ENCODE measurements at regions of chr4 and their contacts with region 1.

Region 1: GRCh38 chr4:86961605-86962295 is 26.9 kb downstream of the AFF1 start:
- DNase-seq: no peak
- ATAC-seq: no peak
- H3K4me3 Mint-ChIP-seq: peak overlapping the region; percentile 68
- H3K27ac Mint-ChIP-seq: peak overlapping the region; percentile 99
- H3K4me1 Mint-ChIP-seq: peaks cover 59% of the 10 kb centered on the region
- H3K27me3 Mint-ChIP-seq: no peaks in the 10 kb centered on the region
- CTCF ChIP-seq: no peak

Region 2: GRCh38 chr4:86825516-86825915 is 136.2 kb before region 1 on chr4:
- CTCF ChIA-PET with region 1: no interaction called
- POLR2A ChIA-PET with region 1: no interaction called
- DNase-seq: no peak
- ATAC-seq: no peak
- H3K4me3 Mint-ChIP-seq: no peak overlapping the region
- H3K27ac Mint-ChIP-seq: no peak overlapping the region
- H3K4me1 Mint-ChIP-seq: no peaks in the 10 kb centered on the region
- H3K27me3 Mint-ChIP-seq: no peaks in the 10 kb centered on the region
- CTCF ChIP-seq: no peak

Region 3: GRCh38 chr4:86948276-86948675 is 13.5 kb before region 1 on chr4:
- CTCF ChIA-PET with region 1: interaction called, 13 read pairs
- POLR2A ChIA-PET with region 1: interaction called, 5 read pairs
- DNase-seq: no peak
- ATAC-seq: peak; percentile 30
- H3K4me3 Mint-ChIP-seq: peak overlapping the region; percentile 38
- H3K27ac Mint-ChIP-seq: peak overlapping the region; percentile 97
- H3K4me1 Mint-ChIP-seq: peaks cover 89% of the 10 kb centered on the region
- H3K27me3 Mint-ChIP-seq: no peaks in the 10 kb centered on the region
- CTCF ChIP-seq: no peak

Region 4: GRCh38 chr4:86993909-86994681 is 32.3 kb after region 1 on chr4:
- CTCF ChIA-PET with region 1: no interaction called
- POLR2A ChIA-PET with region 1: no interaction called
- DNase-seq: no peak
- ATAC-seq: no peak
- H3K4me3 Mint-ChIP-seq: no peak overlapping the region
- H3K27ac Mint-ChIP-seq: peak overlapping the region; percentile 31
- H3K4me1 Mint-ChIP-seq: peaks cover 38% of the 10 kb centered on the region
- H3K27me3 Mint-ChIP-seq: no peaks in the 10 kb centered on the region
- CTCF ChIP-seq: no peak

Region 5: DNA sequence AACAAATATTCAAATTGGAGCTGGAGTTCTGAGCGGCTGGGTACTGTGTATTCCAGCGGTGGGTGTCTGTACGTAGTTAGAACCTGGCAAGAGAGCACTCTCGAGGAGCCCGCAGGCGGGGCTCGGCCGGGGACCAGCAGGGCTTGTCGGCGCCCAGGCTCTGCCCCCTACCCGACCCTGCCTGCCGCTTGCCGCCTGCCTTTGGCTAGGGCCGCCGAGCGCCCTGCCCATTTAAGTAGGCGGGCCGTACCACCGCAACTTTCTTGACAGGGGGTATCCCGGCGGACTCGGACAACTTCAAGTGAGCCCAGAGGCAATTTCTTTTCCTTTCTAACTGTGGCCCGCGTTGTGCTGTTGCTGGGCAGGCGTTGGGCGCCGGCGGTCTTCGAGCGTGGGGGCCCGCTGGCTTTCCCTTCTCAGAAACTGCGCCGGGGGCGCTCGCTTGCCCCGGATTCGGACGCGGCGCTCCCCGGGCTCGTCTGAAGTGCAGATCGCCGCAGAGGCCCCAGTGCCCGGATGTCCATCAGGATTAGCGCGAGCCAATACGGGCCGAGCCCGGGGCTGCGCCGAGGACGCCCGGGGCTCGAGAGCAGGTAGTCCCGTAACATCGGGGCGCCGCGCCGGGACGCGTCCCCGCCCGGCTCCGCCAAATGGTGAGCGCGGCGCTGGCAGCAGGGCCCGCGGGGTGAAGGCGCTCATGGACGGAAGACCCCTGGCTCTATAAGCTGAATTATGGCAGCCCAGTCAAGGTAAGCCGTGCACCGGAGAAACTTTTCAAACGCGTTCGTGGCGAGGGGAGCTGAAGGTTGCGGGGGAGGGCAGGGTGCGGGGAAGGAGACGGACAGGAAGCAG is 45.2 kb after region 1 on chr4:
- CTCF ChIA-PET with region 1: interaction called, 3 read pairs
- POLR2A ChIA-PET with region 1: interaction called, 14 read pairs
- DNase-seq: peak; percentile 93
- ATAC-seq: peak; percentile 87
- H3K4me3 Mint-ChIP-seq: peak overlapping the region; percentile 90
- H3K27ac Mint-ChIP-seq: peak overlapping the region; percentile 96
- H3K4me1 Mint-ChIP-seq: peaks cover 81% of the 10 kb centered on the region
- H3K27me3 Mint-ChIP-seq: no peaks in the 10 kb centered on the region
- CTCF ChIP-seq: no peak

Region 6: GRCh38 chr4:87038837-87039615 is 77.3 kb after region 1 on chr4:
- CTCF ChIA-PET with region 1: no interaction called
- POLR2A ChIA-PET with region 1: no interaction called
- DNase-seq: peak; percentile 52
- ATAC-seq: peak; percentile 67
- H3K4me3 Mint-ChIP-seq: no peak overlapping the region
- H3K27ac Mint-ChIP-seq: peak overlapping the region; percentile 33
- H3K4me1 Mint-ChIP-seq: peaks cover 51% of the 10 kb centered on the region
- H3K27me3 Mint-ChIP-seq: no peaks in the 10 kb centered on the region
- CTCF ChIP-seq: no peak

Measured in WTC11 (cell line).